Thyroid gland (tissue), 4 donors: ENCODE measurements at regions of chr1 and their contacts with region 1.

Region 1: DNA sequence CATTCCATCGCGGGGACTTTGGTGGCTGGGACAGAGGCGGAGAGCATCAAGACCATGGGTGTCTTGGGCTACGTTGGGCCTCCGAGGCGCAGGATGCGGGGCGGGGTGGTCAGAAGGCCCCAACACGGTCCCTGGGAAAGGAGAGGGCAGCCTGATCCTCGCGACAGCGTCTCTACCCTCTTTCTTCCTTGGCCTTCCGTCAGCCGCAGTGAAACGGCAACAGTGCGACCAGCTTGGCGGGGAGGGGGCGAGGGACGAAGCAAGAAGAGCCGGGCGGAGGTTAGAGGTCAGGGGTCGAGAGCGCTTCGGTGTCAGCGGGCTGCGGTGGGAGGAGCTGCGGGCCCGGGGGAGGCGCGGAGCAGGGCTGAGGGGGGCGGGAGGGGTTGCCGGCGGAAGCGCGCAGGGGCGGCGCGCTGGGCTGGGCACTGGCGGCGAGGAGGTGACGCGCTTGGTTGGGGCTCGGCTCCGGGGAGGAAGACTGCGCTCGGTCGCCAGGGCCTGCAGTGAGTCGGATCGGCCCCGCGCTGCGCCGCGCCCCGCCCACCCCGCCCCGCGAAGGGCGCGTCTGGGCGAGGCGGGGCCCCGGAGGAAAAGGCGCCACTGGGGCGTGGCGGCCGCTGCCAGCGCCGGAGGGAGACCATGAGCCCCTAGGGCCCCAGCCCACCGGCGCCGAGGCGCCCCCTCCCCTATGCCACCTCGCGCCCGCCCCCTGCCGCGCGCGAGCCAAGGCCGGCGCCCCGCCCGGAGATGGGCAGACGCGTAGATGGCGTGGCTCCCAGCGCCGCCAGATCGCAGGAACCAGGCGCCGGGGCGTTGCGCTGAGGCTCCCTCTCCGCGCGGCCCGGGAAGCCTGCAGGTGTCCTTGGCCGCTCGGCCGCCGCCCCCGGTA is at the start of gene KCNC4:
- DNase-seq: peak; percentile 82 to 85
- H3K4me3 ChIP-seq: peak within 1 kb of the TSS; percentile 17 to 73 (median 43)
- H3K27ac ChIP-seq: peak within 1 kb of the TSS; percentile 65 to 83 (median 67)
- H3K4me1 ChIP-seq: peaks cover 9 to 27% of the 10 kb centered on the region in 2 donors
- H3K27me3 ChIP-seq: no peaks in the 10 kb centered on the region
- CTCF ChIP-seq: no peak
- POLR2A ChIP-seq: peak in 1 of 2 donors; percentile 51
- total RNA-seq, gene KCNC4: 3.8 to 12.5 (median 4.6) TPM

Region 2: DNA sequence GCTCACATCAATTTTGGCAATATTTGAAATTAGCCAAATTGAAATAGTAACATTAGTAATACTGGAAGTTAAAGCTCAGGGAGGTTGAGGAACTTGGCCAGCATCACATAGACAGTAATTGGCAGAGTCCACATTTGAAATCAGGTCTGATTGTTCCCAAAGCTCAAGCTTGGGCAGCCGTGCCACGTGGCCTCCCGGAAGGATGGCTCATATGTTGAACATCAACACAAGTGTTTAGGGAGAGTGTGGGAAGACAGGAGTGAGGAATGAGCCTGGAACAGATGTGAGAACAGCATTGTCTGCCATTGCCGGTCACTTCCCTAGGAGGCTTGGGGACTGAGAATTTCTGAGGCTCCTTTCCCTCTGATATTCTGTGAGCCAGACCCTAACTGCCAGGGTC is 89.0 kb after region 1 on chr1:
- intact Hi-C with region 1: no loop called
- DNase-seq: no peak
- H3K4me3 ChIP-seq: no peak overlapping the region
- H3K27ac ChIP-seq: no peak overlapping the region
- H3K4me1 ChIP-seq: no peaks in the 10 kb centered on the region
- H3K27me3 ChIP-seq: no peaks in the 10 kb centered on the region
- CTCF ChIP-seq: no peak
- POLR2A ChIP-seq: no peak

Region 3: DNA sequence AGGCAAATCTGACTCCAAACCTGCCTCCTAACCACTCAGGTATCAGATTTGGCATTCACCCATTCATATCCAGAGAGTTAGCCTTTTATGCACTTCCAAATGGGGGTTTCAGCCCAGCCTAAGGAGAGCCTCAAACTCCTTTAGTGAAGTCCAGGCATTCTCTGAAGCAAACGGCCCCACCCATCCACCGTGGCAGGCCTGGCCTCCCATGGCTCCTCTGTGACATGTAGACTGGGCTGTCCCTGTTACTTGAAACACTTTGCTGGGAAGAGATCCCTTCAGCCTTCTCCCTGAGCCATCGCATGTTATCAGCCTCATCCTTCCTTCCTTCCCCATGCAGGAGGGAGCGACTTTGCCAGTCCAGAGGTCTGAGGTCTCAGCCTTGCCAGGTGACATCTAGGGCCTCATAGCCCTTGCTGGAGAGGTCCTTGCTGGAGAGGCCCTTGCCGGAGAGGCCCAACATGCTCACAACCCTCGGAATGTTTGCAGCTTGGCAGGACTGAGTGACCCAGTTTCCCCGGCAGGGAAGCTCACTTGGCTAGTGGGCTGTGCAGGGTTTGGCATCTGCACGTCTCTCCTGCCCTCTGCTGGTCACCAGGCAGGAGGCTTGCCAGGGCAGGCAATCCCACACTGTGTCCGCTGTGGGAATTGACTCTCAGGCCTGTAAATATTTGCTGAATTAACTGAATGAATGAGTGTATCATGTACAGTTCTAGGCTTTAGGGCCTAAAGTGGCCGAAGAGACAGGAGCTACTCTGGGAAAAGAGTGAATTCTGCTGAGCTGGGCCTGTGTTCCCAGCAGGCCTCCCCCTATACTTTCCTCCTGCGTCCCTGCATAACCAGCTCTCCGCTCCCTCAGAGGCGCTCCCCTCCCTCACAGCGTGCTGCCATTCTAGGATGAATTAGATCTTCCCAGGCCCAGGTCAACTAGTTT is 102.5 kb after region 1 on chr1:
- intact Hi-C with region 1: loop called (anchors 1 kb)
- DNase-seq: peak; percentile 78 to 84
- H3K4me3 ChIP-seq: no peak overlapping the region
- H3K27ac ChIP-seq: no peak overlapping the region
- H3K4me1 ChIP-seq: peaks cover 0 to 5% of the 10 kb centered on the region in 2 donors
- H3K27me3 ChIP-seq: no peaks in the 10 kb centered on the region
- CTCF ChIP-seq: peak; percentile 73 to 92 (median 87)
- POLR2A ChIP-seq: no peak

Region 4: GRCh38 chr1:110495926-110496600 is 286.1 kb after region 1 on chr1:
- intact Hi-C with region 1: loop called (anchors 10 kb)
- DNase-seq: peak; percentile 74 to 79
- H3K4me3 ChIP-seq: no peak overlapping the region
- H3K27ac ChIP-seq: no peak overlapping the region
- H3K4me1 ChIP-seq: no peaks in the 10 kb centered on the region
- H3K27me3 ChIP-seq: no peaks in the 10 kb centered on the region
- CTCF ChIP-seq: peak; percentile 67 to 90 (median 80)
- POLR2A ChIP-seq: no peak